ENCODE measurements at regions of chr13 and their contacts with region 1.

Region 1: DNA sequence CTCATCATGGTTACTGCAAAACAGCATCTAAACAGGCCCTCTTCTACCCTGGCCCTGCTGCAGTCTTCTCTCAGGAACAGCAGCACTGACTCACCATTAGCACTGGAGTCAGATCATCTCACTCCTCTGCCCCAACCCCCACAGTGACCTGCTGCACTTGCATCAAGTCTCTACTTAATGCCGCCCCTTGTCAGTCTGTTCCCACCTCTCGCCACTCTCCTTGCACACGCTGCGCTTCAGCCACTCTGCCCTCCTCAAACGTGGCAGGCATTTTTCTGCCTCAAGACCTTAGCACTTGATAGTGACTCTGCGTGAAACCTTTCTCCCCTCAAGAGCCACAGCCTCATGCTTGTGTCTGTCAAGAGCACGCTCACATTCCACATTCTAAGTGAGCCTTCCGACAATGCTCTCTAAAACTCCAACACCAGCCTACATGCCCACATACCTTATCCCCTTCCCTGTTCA is 22.1 kb downstream of the MIPEP start:
- DNase-seq: no peak
- ATAC-seq: no peak

Region 2: GRCh38 chr13:23469951-23470421 is 397.1 kb before region 1 on chr13:
- intact Hi-C with region 1: loop called in 1 of 2 experiments (anchors 5 kb)
- DNase-seq: no peak
- ATAC-seq: no peak

Measured in left colon (tissue), 2 donors.